ENCODE measurements at regions of chr18 and their contacts with region 1.

Region 1: DNA sequence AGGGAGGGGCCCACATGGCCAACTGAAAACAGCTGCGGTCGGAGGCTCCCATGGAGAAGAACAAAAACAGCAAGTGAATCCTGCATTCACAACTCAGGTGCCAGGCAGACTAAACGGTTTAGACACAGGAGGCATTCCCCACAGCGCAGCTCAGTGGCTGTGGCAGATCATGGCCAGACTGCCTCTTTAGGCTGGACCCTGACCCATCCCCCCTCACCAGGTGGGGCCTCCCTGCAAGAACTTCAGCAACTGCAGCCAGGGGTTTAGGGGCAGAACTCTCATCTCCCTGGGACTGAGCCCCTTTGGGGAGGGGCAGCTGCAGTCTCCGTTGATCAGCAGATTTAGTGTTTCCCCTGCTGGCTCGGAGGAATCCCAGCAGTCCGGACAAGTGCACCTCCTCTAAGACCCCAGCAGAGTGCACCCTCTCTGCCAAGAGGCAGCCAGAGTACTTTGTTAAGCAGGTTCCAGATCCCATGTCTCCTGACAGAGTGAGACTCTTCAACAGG is 346.7 kb downstream of the SS18 start:
- DNase-seq: no peak
- ATAC-seq: peak; percentile 39; the same call in 1 of the 3 replicates
- H3K4me3 ChIP-seq: no peak overlapping the region
- H3K27ac ChIP-seq: no peak overlapping the region
- H3K4me1 ChIP-seq: no peaks in the 10 kb centered on the region
- H3K27me3 ChIP-seq: no peaks in the 10 kb centered on the region
- CTCF ChIP-seq: no peak; a peak in 1 of 6 replicates
- EP300 ChIP-seq: no peak
- POLR2A ChIP-seq: no peak
- RAD21 ChIP-seq: no peak

Region 2: GRCh38 chr18:25695980-25696379 is 47.7 kb before region 1 on chr18:
- CTCF ChIA-PET with region 1: no interaction called
- POLR2A ChIA-PET with region 1: no interaction called
- in situ Hi-C with region 1: no loop called
- intact Hi-C with region 1: loop called (anchors 10 kb)
- DNase-seq: no peak
- ATAC-seq: no peak
- H3K4me3 ChIP-seq: no peak overlapping the region
- H3K27ac ChIP-seq: no peak overlapping the region
- H3K4me1 ChIP-seq: no peaks in the 10 kb centered on the region
- H3K27me3 ChIP-seq: no peaks in the 10 kb centered on the region
- CTCF ChIP-seq: no peak
- EP300 ChIP-seq: no peak
- POLR2A ChIP-seq: no peak
- RAD21 ChIP-seq: no peak

Region 3: DNA sequence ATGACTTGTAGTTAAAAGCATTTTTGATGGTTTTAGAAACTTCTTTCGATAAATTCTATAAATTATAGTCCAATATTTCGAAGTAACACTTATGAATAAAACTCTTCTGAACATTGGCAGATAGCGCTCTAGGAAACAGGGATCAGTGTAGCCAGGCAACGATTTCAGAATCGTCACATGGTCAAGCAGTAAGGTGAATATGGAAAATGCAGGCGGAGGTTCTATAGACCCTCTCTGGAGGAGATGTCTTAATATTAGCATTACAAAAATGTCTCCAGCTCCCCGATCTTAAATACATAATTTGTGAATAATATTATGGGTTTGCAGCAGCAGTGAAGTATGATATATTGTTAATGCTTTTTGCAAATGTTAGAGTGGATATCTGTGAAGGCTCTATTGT is 36.4 kb after region 1 on chr18:
- CTCF ChIA-PET with region 1: no interaction called
- POLR2A ChIA-PET with region 1: no interaction called
- in situ Hi-C with region 1: no loop called
- intact Hi-C with region 1: no loop called
- DNase-seq: no peak
- ATAC-seq: no peak
- H3K4me3 ChIP-seq: no peak overlapping the region
- H3K27ac ChIP-seq: no peak overlapping the region
- H3K4me1 ChIP-seq: no peaks in the 10 kb centered on the region
- H3K27me3 ChIP-seq: no peaks in the 10 kb centered on the region
- CTCF ChIP-seq: no peak
- EP300 ChIP-seq: no peak
- POLR2A ChIP-seq: no peak
- RAD21 ChIP-seq: no peak